Activated T-helper 1 cell treated with anti-CD3 and anti-CD28 coated beads, Interleukin-12 subunit alpha, Interleukin-12 subunit beta, Interleukin-2, Interleukin-4 antibody, amounts not matched to agents 30 ng/mL and 10 ng/mL and 1 ng/mL, durations not matched to agents 14 hours and 24 hours and 36 hours (primary cell): ENCODE measurements at regions of chr14 and their contacts with region 1.

Region 1: GRCh38 chr14:52413729-52414408 is 99.8 kb downstream of the PTGER2 start:
- DNase-seq: no peak
- H3K4me3 Mint-ChIP-seq: peak overlapping the region; percentile 62
- H3K27ac Mint-ChIP-seq: peak overlapping the region; percentile 95
- H3K4me1 Mint-ChIP-seq: peaks cover 58% of the 10 kb centered on the region
- H3K27me3 Mint-ChIP-seq: no peaks in the 10 kb centered on the region

Region 2: GRCh38 chr14:51239813-51240803 is 1173.8 kb before region 1 on chr14 and contains the start of gene TMX1:
- intact Hi-C with region 1: loop called (anchors 10 kb)
- DNase-seq: peak; percentile 87
- H3K4me3 Mint-ChIP-seq: no peak within 1 kb of the TSS
- H3K27ac Mint-ChIP-seq: no peak within 1 kb of the TSS
- H3K4me1 Mint-ChIP-seq: peaks cover 12% of the 10 kb centered on the region
- H3K27me3 Mint-ChIP-seq: no peaks in the 10 kb centered on the region
- total RNA-seq, gene TMX1: 51.1 and 51.3 TPM in 2 replicates

Region 3: DNA sequence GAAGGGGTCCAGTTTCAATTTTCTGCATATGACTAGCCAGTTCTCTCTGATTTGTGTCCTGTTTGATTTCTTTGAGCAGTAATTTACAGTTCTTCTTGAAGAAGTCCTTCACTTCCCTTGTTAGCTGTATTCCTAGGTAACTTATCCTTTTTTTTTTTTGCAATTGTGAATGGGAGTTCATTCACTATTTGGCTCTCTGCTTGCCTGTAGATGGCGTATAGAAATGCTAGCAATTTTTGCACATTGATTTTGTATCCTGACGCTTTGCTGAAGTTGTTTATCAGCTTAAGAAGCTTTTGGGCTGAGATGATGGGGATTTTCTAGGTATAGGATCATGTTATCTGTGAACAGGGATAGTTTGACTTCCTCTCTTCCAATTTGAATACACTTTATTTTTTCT is 267.4 kb before region 1 on chr14:
- intact Hi-C with region 1: no loop called
- DNase-seq: no peak
- H3K4me3 Mint-ChIP-seq: no peak overlapping the region
- H3K27ac Mint-ChIP-seq: no peak overlapping the region
- H3K4me1 Mint-ChIP-seq: no peaks in the 10 kb centered on the region
- H3K27me3 Mint-ChIP-seq: peaks cover 16% of the 10 kb centered on the region

Region 4: DNA sequence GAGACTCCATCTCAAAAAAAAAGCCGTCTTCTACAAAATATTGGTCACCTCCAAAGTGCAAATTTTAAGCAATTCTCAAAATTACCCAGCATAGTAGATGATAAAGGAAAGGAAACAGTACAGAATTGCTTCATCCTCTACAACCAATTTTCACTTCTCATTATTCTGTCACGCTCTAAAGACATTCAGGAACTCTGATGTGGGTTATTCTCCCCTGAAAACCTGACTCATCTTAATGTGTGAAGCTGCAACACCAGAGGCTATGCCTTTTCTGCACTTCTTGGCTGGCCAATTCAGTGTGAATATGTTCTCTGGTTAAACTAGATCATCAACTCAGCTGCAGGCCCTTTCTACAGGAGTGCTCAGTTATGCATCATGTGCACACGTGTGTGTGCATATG is 88.7 kb before region 1 on chr14:
- intact Hi-C with region 1: loop called (anchors 1 kb)
- DNase-seq: peak; percentile 52
- H3K4me3 Mint-ChIP-seq: peak overlapping the region; percentile 77
- H3K27ac Mint-ChIP-seq: peak overlapping the region; percentile 62
- H3K4me1 Mint-ChIP-seq: peaks cover 90% of the 10 kb centered on the region
- H3K27me3 Mint-ChIP-seq: no peaks in the 10 kb centered on the region

Region 5: DNA sequence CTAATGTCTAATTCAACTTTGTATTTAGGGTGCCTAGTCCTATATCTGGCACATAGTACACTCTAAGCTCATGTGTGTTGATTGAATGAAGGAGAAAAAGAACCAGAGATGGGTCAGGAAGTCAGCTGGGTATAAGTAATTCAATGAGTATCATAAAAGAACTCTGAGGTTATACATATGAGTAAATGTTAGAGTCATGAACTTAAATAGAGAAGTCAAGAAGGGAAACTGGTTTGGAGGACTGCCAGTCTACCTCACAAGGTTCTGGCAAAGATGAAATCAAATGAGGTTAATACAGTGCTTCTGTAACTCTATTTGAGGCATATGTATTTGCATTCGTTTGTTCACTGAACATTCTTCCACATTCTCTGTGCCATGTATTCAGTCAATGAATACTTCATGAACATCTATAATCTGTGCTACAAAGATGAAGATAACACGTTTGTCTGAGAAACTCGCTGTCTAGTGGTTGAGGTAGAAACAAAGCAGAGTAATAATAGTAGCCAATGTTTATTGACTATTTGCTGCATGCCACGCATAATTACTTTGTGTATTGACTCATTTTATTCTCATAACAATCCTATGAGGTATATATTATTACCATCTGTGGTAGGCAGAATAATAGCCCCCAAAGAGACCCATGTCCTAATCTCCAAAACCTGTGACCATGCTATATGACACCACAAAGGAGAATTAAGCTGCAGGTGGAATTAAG is 10.9 kb before region 1 on chr14:
- intact Hi-C with region 1: loop called (anchors 1 kb)
- DNase-seq: no peak
- H3K4me3 Mint-ChIP-seq: no peak overlapping the region
- H3K27ac Mint-ChIP-seq: peak overlapping the region; percentile 54
- H3K4me1 Mint-ChIP-seq: peaks cover 73% of the 10 kb centered on the region
- H3K27me3 Mint-ChIP-seq: no peaks in the 10 kb centered on the region

Region 6: DNA sequence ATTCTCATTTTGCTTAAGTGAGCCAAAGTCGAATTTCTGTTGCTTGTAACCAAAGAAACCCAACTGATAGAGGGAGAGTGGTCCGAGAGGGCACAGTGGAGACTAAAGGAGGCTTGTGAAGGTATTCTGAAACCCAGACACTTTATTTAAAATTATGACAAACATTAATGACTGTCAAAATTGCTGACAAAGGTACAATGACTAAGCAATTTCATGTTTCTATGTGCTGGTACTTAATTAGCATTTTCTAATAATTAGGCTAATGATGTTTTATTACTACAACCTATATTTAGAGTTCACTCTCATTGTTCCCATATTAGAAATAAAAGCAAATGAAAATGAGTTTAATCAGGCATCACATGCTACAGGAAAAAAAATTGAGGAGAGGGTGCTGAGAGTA is 16.6 kb after region 1 on chr14:
- intact Hi-C with region 1: no loop called
- DNase-seq: no peak
- H3K4me3 Mint-ChIP-seq: no peak overlapping the region
- H3K27ac Mint-ChIP-seq: no peak overlapping the region
- H3K4me1 Mint-ChIP-seq: peaks cover 23% of the 10 kb centered on the region
- H3K27me3 Mint-ChIP-seq: peaks cover under 1% of the 10 kb centered on the region

Region 7: DNA sequence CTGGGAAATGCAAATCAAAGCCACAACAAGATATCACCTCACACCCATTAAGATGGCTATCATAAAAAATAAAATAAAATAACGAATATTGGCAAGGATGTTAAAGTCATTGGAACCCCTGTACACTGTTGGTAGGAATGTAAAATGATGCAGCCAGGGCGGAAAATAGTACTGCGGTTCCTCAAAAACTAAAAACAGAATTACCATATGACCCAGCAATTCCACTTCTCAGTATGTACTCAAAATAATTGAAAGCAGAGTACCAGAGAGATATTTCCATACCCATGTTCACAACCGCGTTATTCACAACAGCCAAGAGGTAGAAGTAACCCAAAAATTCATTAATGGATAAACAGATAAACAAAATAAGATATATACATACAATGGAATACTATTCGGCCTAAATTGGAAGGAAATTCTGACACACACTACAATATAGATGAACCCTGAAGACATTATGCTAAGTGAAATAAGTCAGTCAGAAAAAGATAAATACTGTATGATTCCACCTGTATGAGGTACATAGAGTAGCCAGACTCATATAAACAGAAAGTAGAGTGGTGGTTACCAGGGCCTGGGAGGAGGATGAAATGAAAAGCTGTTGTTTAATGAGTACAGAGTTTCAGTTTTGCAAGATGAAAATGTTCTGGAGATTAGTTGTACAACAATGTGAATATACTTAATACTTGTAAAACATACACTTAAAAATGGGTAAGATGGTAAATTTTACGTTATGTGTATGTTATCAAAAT is 53.8 kb after region 1 on chr14:
- intact Hi-C with region 1: loop called (anchors 1 kb)
- DNase-seq: no peak
- H3K4me3 Mint-ChIP-seq: no peak overlapping the region
- H3K27ac Mint-ChIP-seq: peak overlapping the region; percentile 75
- H3K4me1 Mint-ChIP-seq: peaks cover 24% of the 10 kb centered on the region
- H3K27me3 Mint-ChIP-seq: no peaks in the 10 kb centered on the region